ENCODE measurements at regions of chr16 and their contacts with region 1.

Region 1: DNA sequence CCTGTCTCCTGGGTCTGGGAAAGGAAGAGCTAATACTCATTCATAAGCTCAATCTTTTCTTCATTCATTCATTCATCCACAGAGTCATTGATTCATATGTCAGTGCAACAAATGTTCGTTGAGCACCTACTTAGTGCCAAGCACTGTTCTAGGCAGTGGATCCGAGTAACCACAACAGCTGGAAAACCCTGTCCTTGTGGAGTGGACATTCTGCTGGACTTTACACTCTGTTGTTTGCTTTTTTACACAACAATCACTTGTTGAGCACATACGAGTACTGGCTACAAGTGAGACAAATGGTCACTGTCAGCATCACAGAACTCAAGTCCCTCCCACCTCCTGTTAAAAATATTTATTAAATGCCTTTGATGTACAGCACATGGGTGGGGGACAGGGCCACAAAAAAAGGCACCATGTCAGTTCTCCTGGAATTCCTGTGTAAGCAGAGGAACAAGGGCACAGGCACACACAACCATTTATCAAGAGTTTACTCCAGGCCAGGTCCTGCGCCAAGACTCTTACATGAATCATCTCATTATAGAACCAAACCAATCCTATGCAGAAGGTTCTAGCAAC is 46.9 kb downstream of the TEKT5 start:
- DNase-seq: peak; percentile 100
- ATAC-seq: peak; percentile 94
- H3K4me3 ChIP-seq: 0 out of 6 replicates have a peak overlapping the region, but pooled peaks of 1 of the 3 experiments have one; percentile 6
- H3K27ac ChIP-seq: peak overlapping the region; percentile 80
- H3K4me1 ChIP-seq: peaks cover 91% of the 10 kb centered on the region
- H3K27me3 ChIP-seq: no peaks in the 10 kb centered on the region
- CTCF ChIP-seq: no peak; the same call in none of the 2 replicates
- EP300 ChIP-seq: peak; percentile 99
- POLR2A ChIP-seq: 0 out of 4 replicates have a peak, but pooled peaks of 1 of the 2 experiments have one; percentile 17
- RAD21 ChIP-seq: peak; percentile 11; the same call in 1 of the 2 replicates

Region 2: GRCh38 chr16:10616730-10617555 is 30.9 kb before region 1 on chr16:
- CTCF ChIA-PET with region 1: no interaction called
- POLR2A ChIA-PET with region 1: interaction called, 6 read pairs
- in situ Hi-C with region 1: no loop called
- intact Hi-C with region 1: loop called (anchors 1 kb)
- DNase-seq: peak; percentile 96
- ATAC-seq: peak; percentile 91
- H3K4me3 ChIP-seq: peak overlapping the region; percentile 44 to 77 (median 48)
- H3K27ac ChIP-seq: peak overlapping the region; percentile 72
- H3K4me1 ChIP-seq: peaks cover 95% of the 10 kb centered on the region
- H3K27me3 ChIP-seq: no peaks in the 10 kb centered on the region
- CTCF ChIP-seq: peak; percentile 61
- EP300 ChIP-seq: no peak; a peak in 1 of 4 replicates
- POLR2A ChIP-seq: peak in 1 of 2 experiments; percentile 83; a peak in 3 of 4 replicates
- RAD21 ChIP-seq: no peak; the same call in 1 of the 2 replicates

Region 3: DNA sequence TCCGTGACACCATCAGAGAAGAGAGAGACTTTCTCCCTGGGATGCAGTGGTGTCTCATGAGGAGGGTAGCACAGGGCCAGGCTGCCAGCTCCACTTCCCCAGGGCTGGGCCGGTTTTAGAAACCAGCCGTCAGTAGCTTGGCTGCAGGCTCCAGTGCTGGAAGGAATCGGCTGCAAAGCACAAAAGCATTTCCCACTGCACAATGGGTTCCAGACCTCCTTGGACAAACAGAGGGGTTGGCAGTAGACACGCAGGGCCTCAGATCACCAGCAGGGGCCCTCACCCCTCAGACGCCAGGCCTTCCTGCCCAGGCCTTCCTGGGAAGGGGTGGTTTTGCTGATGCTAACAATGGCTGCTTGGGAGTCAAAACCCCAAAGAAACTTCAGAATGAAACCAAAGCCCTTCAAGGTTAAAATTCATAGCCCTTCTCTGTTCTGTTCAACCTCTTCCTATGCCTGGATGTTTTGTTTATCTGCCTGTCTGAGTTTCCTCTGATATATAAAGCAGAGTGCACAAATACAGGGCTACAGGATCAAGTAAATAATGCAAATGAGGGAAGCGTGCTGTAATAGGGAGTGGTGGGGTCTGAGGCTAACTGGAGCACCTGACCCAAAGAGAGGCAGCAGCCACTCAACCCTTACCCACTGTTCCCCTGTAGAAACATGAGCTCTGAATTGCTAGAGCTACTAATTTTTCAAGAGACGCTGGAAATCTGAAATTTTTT is 20.7 kb after region 1 on chr16:
- CTCF ChIA-PET with region 1: no interaction called
- POLR2A ChIA-PET with region 1: no interaction called
- in situ Hi-C with region 1: no loop called
- intact Hi-C with region 1: loop called (anchors 1 kb)
- DNase-seq: peak; percentile 64
- ATAC-seq: peak; percentile 98
- H3K4me3 ChIP-seq: peak overlapping the region in 1 of 3 experiments; percentile 23; a peak in 1 of 6 replicates
- H3K27ac ChIP-seq: no peak overlapping the region
- H3K4me1 ChIP-seq: peaks cover 18% of the 10 kb centered on the region
- H3K27me3 ChIP-seq: peaks cover 2 to 5% of the 10 kb centered on the region in 2 experiments; a peak in 3 of 5 replicates
- CTCF ChIP-seq: peak; percentile 93
- EP300 ChIP-seq: no peak
- POLR2A ChIP-seq: no peak
- RAD21 ChIP-seq: peak; percentile 77

Measured in HepG2 (cell line).